Natural killer cell (primary cell): ENCODE measurements at regions of chrX and their contacts with region 1.

Region 1: DNA sequence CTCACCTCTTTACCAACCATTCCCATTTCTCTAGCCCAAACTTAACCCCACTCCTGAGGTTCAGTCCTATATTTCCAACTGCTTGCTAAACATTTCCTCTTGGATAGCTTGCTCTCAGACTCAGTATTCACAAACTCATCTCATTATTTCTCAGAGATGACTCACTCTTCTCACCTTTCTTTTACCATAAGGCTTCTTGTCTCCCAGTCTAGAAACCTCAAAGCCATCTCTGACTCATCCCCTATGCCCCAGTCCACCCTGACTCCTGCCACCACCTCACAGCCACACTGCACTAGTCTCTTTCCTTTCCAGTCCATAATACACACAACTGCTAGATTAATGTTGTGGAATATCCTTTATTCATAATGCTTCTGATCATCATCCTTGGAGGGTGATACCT is 4.8 kb downstream of the FRMPD3 start:
- DNase-seq: peak in 1 of 2 donors; percentile 65
- ATAC-seq: peak; percentile 65 to 77 (median 74)
- H3K4me3 ChIP-seq: no peak overlapping the region
- H3K4me3 Mint-ChIP-seq: no peak overlapping the region
- H3K27ac ChIP-seq: no peak overlapping the region
- H3K27ac Mint-ChIP-seq: no peak overlapping the region
- H3K4me1 ChIP-seq: peaks cover 43% of the 10 kb centered on the region
- H3K4me1 Mint-ChIP-seq: peaks cover 7 to 22% of the 10 kb centered on the region in 2 donors
- H3K27me3 ChIP-seq: no peaks in the 10 kb centered on the region
- H3K27me3 Mint-ChIP-seq: peaks cover 6 to 17% of the 10 kb centered on the region in 2 donors
- CTCF ChIP-seq: no peak

Region 2: GRCh38 chrX:107480272-107480671 is 26.0 kb after region 1 on chrX:
- intact Hi-C with region 1: loop called (anchors 1 kb)
- DNase-seq: peak; percentile 17 to 55
- ATAC-seq: peak; percentile 77 to 91 (median 89)
- H3K4me3 ChIP-seq: no peak overlapping the region
- H3K4me3 Mint-ChIP-seq: peak overlapping the region; percentile 56
- H3K27ac ChIP-seq: no peak overlapping the region
- H3K27ac Mint-ChIP-seq: peak overlapping the region in 1 of 2 donors; percentile 58
- H3K4me1 ChIP-seq: peaks cover 3% of the 10 kb centered on the region
- H3K4me1 Mint-ChIP-seq: peaks cover 21 to 26% of the 10 kb centered on the region in 2 donors
- H3K27me3 ChIP-seq: no peaks in the 10 kb centered on the region
- H3K27me3 Mint-ChIP-seq: peaks cover 10 to 47% of the 10 kb centered on the region in 2 donors
- CTCF ChIP-seq: no peak

Region 3: DNA sequence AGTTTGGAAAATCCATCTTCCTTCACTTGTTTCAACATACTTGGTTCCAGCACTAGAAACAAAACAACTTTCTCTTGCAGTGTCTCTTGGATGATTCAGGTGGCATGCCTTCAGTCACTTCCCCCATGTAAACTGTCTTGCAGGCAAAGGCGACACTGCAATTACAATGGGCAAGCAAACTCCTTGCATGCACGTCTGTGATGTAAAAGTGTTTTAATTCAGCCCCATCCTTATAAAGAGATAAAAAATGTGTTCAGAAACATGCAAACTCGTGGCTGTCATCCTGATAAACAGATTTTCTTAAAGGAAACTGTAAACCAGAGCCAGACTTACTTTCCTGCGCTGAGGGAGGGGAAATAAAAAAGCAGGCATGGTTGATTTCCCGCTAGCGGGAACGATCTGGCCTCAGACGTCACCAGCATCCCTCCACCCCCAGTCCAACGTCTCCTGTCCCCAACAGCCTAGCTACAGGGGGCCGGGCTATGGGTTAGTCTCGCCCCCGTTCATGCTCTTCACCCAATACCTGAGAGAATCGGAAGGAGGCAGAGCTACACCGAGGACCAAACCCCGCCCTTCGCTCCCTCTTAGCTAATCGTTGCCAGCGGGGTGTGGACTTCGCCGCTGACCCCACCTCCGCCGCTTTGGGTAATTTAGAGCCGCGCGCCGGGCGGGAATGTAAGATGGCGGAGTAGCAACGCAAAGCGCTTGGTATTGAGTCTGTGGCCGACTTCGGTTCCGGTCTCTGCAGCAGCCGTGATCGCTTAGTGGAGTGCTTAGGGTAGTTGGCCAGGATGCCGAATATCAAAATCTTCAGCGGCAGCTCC is 173.7 kb after region 1 on chrX and contains the start of gene PRPS1:
- intact Hi-C with region 1: loop called (anchors 5 kb)
- DNase-seq: peak; percentile 78 to 94
- ATAC-seq: peak; percentile 96 to 100 (median 97)
- H3K4me3 ChIP-seq: peak within 1 kb of the TSS; percentile 85
- H3K4me3 Mint-ChIP-seq: peak within 1 kb of the TSS; percentile 84
- H3K27ac ChIP-seq: peak within 1 kb of the TSS; percentile 85
- H3K27ac Mint-ChIP-seq: peak within 1 kb of the TSS; percentile 51 to 85
- H3K4me1 ChIP-seq: peaks cover 9% of the 10 kb centered on the region
- H3K4me1 Mint-ChIP-seq: peaks cover 16 to 21% of the 10 kb centered on the region in 2 donors
- H3K27me3 ChIP-seq: no peaks in the 10 kb centered on the region
- H3K27me3 Mint-ChIP-seq: no peaks in the 10 kb centered on the region
- CTCF ChIP-seq: no peak
- total RNA-seq, gene PRPS1: 43.7 to 51.5 (median 49.3) TPM

Region 4: GRCh38 chrX:107654872-107655761 is 200.8 kb after region 1 on chrX:
- intact Hi-C with region 1: no loop called
- DNase-seq: peak; percentile 52 to 82
- ATAC-seq: peak; percentile 87 to 91 (median 89)
- H3K4me3 ChIP-seq: no peak overlapping the region
- H3K4me3 Mint-ChIP-seq: no peak overlapping the region
- H3K27ac ChIP-seq: no peak overlapping the region
- H3K27ac Mint-ChIP-seq: no peak overlapping the region
- H3K4me1 ChIP-seq: peaks cover 4% of the 10 kb centered on the region
- H3K4me1 Mint-ChIP-seq: peaks cover 0 to 5% of the 10 kb centered on the region in 2 donors
- H3K27me3 ChIP-seq: no peaks in the 10 kb centered on the region
- H3K27me3 Mint-ChIP-seq: no peaks in the 10 kb centered on the region
- CTCF ChIP-seq: peak; percentile 64

Region 5: GRCh38 chrX:107710617-107711391 is 256.5 kb after region 1 on chrX:
- intact Hi-C with region 1: loop called (anchors 5 kb)
- DNase-seq: peak; percentile 17 to 91
- ATAC-seq: peak; percentile 58 to 86 (median 72)
- H3K4me3 ChIP-seq: no peak overlapping the region
- H3K4me3 Mint-ChIP-seq: peak overlapping the region; percentile 92
- H3K27ac ChIP-seq: peak overlapping the region; percentile 100
- H3K27ac Mint-ChIP-seq: peak overlapping the region; percentile 99
- H3K4me1 ChIP-seq: peaks cover 59% of the 10 kb centered on the region
- H3K4me1 Mint-ChIP-seq: peaks cover 46 to 55% of the 10 kb centered on the region in 2 donors
- H3K27me3 ChIP-seq: no peaks in the 10 kb centered on the region
- H3K27me3 Mint-ChIP-seq: no peaks in the 10 kb centered on the region
- CTCF ChIP-seq: no peak